ENCODE measurements at regions of chr14 and their contacts with region 1.

Region 1: DNA sequence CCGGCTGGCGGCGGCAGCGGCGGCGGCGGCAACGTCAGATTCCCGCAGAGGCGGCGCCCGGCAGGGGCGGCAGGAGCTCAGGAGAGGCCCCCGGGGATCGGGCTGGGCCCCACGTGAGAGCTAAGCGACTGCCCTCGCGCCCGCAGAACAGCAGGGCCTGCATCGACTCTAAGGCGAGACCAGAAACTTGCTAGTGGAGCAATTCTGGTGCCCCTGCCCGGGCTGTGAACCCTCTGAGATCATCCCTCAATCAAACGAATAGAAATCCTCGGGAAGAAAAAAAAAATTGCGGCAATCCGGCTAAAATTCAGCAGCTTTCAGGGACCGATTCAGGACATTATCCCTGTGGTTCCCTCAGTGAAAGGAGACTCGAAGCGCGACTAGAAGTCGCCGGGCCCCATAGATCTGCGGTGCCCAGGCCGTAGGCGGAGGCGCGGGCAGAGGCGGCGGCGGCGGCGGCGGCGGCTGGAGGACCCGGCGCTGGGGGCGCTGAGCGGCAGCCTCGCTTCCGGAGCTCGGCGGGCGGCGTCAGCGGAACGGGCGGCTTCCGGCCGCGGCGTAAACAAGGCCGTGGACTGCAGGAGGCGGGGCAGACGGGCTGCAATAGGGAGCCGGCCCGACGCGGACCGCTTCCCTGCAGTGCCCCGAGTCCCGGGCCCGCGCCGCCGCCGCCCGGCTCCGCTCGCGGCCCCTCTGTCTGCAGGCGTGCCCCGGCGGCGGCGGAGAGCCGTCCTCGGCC is at the start of gene KLHDC2:
- DNase-seq: peak; percentile 85 to 87
- ATAC-seq: peak; percentile 91 to 92
- H3K4me3 ChIP-seq: peak within 1 kb of the TSS; percentile 84 to 100 (median 88)
- H3K27ac ChIP-seq: peak within 1 kb of the TSS; percentile 94 to 100 (median 96)
- H3K4me1 ChIP-seq: peaks cover 33 to 37% of the 10 kb centered on the region in 2 donors
- H3K27me3 ChIP-seq: no peaks in the 10 kb centered on the region
- CTCF ChIP-seq: peak; percentile 39 to 56 (median 46)
- POLR2A ChIP-seq: peak; percentile 92 to 98
- total RNA-seq, gene KLHDC2: 73.9 to 96.5 (median 82.3) TPM

Region 2: GRCh38 chr14:49692811-49693734 is 74.7 kb before region 1 on chr14 and contains the start of gene KLHDC1:
- in situ Hi-C with region 1: no loop called
- intact Hi-C with region 1: loop called (anchors 2 kb)
- DNase-seq: peak; percentile 65 to 82
- ATAC-seq: peak; percentile 84 to 85
- H3K4me3 ChIP-seq: peak within 1 kb of the TSS; percentile 65 to 78 (median 69)
- H3K27ac ChIP-seq: peak within 1 kb of the TSS; percentile 85 to 91 (median 90)
- H3K4me1 ChIP-seq: peaks cover 5 to 11% of the 10 kb centered on the region in 2 donors
- H3K27me3 ChIP-seq: no peaks in the 10 kb centered on the region
- CTCF ChIP-seq: no peak
- POLR2A ChIP-seq: peak; percentile 85 to 88
- total RNA-seq, gene KLHDC1: 4.1 to 7.2 (median 4.7) TPM

Region 3: GRCh38 chr14:49796025-49796424 is 28.3 kb after region 1 on chr14:
- in situ Hi-C with region 1: no loop called
- intact Hi-C with region 1: no loop called
- DNase-seq: no peak
- ATAC-seq: no peak
- H3K4me3 ChIP-seq: no peak overlapping the region
- H3K27ac ChIP-seq: no peak overlapping the region
- H3K4me1 ChIP-seq: peaks cover 0 to 6% of the 10 kb centered on the region in 2 donors
- H3K27me3 ChIP-seq: no peaks in the 10 kb centered on the region
- CTCF ChIP-seq: no peak
- POLR2A ChIP-seq: no peak

Region 4: GRCh38 chr14:49852301-49853157 is 84.8 kb after region 1 on chr14 and contains the start of gene NEMF:
- in situ Hi-C with region 1: no loop called
- intact Hi-C with region 1: loop called (anchors 5 kb)
- DNase-seq: peak; percentile 71 to 83
- ATAC-seq: peak; percentile 81
- H3K4me3 ChIP-seq: peak within 1 kb of the TSS; percentile 78 to 95 (median 86)
- H3K27ac ChIP-seq: peak within 1 kb of the TSS; percentile 92 to 98 (median 96)
- H3K4me1 ChIP-seq: peaks cover 37 to 39% of the 10 kb centered on the region in 2 donors
- H3K27me3 ChIP-seq: no peaks in the 10 kb centered on the region
- CTCF ChIP-seq: peak; percentile 76 to 92 (median 78)
- POLR2A ChIP-seq: peak; percentile 79 to 82
- total RNA-seq, gene NEMF: 56.5 to 71.1 (median 65.2) TPM

Region 5: GRCh38 chr14:50116181-50116956 is 348.6 kb after region 1 on chr14 and contains the start of gene VCPKMT:
- in situ Hi-C with region 1: no loop called
- intact Hi-C with region 1: loop called (anchors 10 kb)
- DNase-seq: peak; percentile 82 to 90
- ATAC-seq: peak; percentile 94 to 95
- H3K4me3 ChIP-seq: peak within 1 kb of the TSS; percentile 75 to 87 (median 82)
- H3K27ac ChIP-seq: peak within 1 kb of the TSS; percentile 86 to 92 (median 90)
- H3K4me1 ChIP-seq: peaks cover 14% of the 10 kb centered on the region in 2 donors
- H3K27me3 ChIP-seq: no peaks in the 10 kb centered on the region
- CTCF ChIP-seq: peak in 1 of 5 experiments; percentile 7
- POLR2A ChIP-seq: peak; percentile 77 to 86
- total RNA-seq, gene VCPKMT: 2.2 to 7.3 (median 4.9) TPM

Region 6: DNA sequence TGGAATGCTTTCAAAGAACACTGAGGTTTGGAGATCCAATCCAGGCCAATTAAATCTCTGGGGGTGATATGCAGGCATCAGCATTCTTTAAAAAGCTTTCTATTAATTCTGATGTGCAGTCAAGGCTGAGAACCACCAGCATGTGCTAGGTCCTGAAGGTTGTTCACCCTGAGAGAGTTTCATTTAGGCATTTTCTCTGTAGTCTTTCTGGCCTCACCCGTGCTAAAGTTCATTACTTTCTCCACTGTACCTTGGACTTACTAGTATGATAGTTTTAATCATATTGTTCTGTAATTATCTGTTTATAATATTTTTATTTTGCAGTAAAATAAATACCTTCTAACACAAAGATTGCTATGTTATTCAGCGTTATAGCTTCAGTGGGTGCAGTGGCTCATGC is 430.8 kb after region 1 on chr14:
- in situ Hi-C with region 1: no loop called
- intact Hi-C with region 1: no loop called
- DNase-seq: no peak
- ATAC-seq: no peak
- H3K4me3 ChIP-seq: no peak overlapping the region
- H3K27ac ChIP-seq: no peak overlapping the region
- H3K4me1 ChIP-seq: no peaks in the 10 kb centered on the region
- H3K27me3 ChIP-seq: no peaks in the 10 kb centered on the region
- CTCF ChIP-seq: no peak
- POLR2A ChIP-seq: no peak

Measured in gastrocnemius medialis (tissue), 4 donors.